Activated CD4-positive, alpha-beta T cell treated with anti-CD3 and anti-CD28 coated beads for 36 hours (primary cell): ENCODE measurements at regions of chr6 and their contacts with region 1.

Region 1: GRCh38 chr6:128062882-128063603 is 162.2 kb upstream of the THEMIS start:
- DNase-seq: no peak
- ATAC-seq: no peak
- H3K4me3 Mint-ChIP-seq: no peak overlapping the region
- H3K27ac Mint-ChIP-seq: no peak overlapping the region
- H3K4me1 Mint-ChIP-seq: no peaks in the 10 kb centered on the region
- H3K27me3 Mint-ChIP-seq: no peaks in the 10 kb centered on the region

Region 2: DNA sequence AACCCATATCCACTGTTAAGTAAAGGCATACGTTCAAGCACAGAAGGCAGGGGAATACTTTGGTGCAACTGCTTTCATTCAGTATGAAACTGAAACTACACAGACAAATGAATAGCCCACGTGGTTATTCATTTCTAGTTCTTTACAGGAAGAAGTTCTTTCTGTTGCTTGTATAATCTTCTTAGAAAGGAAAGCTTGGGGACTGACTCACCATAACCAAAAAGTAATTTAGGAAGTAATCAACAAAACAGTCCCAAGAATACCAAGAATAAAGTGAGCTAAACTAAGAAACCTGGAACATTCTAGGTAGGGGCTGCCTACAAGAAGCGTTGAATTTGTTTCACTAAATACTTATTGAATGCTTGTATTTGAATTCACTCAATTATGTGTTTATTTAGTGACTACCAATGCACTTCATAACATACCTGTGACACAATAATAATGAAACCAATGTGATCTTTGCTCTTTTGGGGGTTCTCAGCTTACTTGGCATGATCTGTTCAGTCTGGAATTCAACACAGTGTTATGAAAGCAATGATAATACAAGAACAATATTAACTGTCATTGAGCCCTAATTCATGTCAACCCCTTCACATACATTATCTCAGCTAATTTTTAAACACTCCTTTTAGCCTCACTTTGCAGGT is 578.7 kb before region 1 on chr6:
- CTCF ChIA-PET with region 1: no interaction called
- POLR2A ChIA-PET with region 1: no interaction called
- intact Hi-C with region 1: no loop called
- DNase-seq: no peak
- ATAC-seq: peak; percentile 93
- H3K4me3 Mint-ChIP-seq: peak overlapping the region; percentile 55
- H3K27ac Mint-ChIP-seq: peak overlapping the region; percentile 5
- H3K4me1 Mint-ChIP-seq: peaks cover 26% of the 10 kb centered on the region
- H3K27me3 Mint-ChIP-seq: peaks cover 20% of the 10 kb centered on the region

Region 3: GRCh38 chr6:128186729-128187128 is 123.7 kb after region 1 on chr6:
- CTCF ChIA-PET with region 1: no interaction called
- POLR2A ChIA-PET with region 1: interaction called, 14 read pairs
- intact Hi-C with region 1: no loop called
- DNase-seq: no peak
- ATAC-seq: no peak
- H3K4me3 Mint-ChIP-seq: no peak overlapping the region
- H3K27ac Mint-ChIP-seq: no peak overlapping the region
- H3K4me1 Mint-ChIP-seq: no peaks in the 10 kb centered on the region
- H3K27me3 Mint-ChIP-seq: no peaks in the 10 kb centered on the region